ENCODE measurements at regions of chrX and their contacts with region 1.

Region 1: DNA sequence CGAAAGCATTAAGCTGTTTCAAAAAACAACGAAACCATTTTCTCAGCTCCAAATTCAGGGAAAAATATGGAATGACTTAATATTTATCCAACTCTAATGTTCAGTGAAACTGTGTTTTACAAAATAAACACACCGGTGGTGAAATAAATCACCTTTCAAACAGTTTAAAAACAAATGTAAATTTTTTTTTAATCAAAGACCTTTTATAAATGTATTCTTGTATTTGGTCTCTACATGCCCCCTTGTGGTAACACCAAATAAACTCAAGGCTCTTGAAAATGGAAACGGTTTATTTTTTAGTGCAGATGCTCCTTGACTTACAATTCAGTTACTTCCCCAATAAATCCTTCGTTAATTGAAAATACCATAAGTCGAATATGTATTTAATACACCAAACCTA is 45.8 kb upstream of the ITM2A start:
- DNase-seq: no peak
- ATAC-seq: no peak
- H3K4me3 ChIP-seq: peak overlapping the region in 9 of 10 donors; percentile 3 to 49 (median 42)
- H3K27ac ChIP-seq: peak overlapping the region in 4 of 10 donors; percentile 5 to 69 (median 64)
- H3K4me1 ChIP-seq: no peaks in the 10 kb centered on the region
- H3K27me3 ChIP-seq: peaks cover 0 to 5% (median 0%) of the 10 kb centered on the region in 7 donors
- CTCF ChIP-seq: peak in 8 of 9 donors; percentile 14 to 65 (median 44)

Region 2: GRCh38 chrX:78555401-78555980 is 857.5 kb before region 1 on chrX:
- intact Hi-C with region 1: loop called in 3 of 10 experiments (anchors 5 to 10 kb)
- DNase-seq: no peak
- ATAC-seq: no peak
- H3K4me3 ChIP-seq: no peak overlapping the region
- H3K27ac ChIP-seq: no peak overlapping the region
- H3K4me1 ChIP-seq: no peaks in the 10 kb centered on the region
- H3K27me3 ChIP-seq: no peaks in the 10 kb centered on the region
- CTCF ChIP-seq: peak; percentile 6 to 60 (median 45)

Region 3: GRCh38 chrX:79081895-79082512 is 331.0 kb before region 1 on chrX:
- intact Hi-C with region 1: loop called in 1 of 10 experiments (anchors 5 kb)
- DNase-seq: peak in 1 of 2 donors; percentile 6
- ATAC-seq: peak in 5 of 8 donors; percentile 23 to 61 (median 50)
- H3K4me3 ChIP-seq: no peak overlapping the region
- H3K27ac ChIP-seq: peak overlapping the region in 1 of 10 donors; percentile 22
- H3K4me1 ChIP-seq: peaks cover 0 to 7% (median 0%) of the 10 kb centered on the region in 9 donors
- H3K27me3 ChIP-seq: peaks cover 0 to 14% (median 0%) of the 10 kb centered on the region in 7 donors
- CTCF ChIP-seq: peak; percentile 26 to 69 (median 62)

Region 4: DNA sequence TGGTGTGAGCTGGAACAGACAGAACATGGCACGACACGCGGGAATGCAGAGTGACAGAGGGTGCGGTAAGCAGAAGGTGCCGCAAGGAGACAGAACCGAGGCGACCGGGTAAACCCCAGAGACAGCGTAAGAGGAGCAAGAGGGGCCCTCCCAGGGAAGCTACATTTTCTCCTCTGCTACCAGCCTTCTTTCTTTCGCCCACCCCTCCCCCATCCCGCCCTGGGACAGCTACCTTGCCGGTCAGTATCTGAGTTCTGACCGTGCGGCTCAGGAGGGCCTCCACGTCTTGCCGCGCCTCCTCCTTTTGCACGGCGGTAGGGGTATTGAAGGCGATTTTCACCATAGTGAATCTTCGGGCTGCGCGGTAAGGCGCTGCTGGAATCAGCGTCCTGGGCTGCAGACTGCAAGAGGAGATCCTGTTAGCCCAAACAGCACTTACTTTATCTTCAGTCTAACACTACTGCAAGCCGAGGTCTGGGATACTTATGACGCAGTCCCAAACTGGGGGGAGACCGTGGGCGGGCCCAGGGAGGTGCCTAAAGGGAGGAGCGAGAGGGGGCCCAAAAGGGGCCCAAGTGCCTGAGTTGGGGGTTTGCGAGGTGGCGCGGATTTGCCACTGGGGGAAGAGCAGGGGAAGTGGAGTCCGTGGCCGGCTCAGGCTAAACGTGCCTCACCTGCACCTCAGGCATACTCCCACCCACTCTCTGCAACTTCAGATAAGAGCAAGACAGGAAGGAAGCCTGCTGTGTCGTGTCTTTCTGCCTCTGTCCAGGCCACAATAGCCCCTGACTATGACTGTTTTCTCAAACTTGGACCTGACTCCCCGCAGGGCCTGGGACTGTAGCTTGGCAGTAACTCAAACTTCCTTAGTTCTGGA is 45.9 kb before region 1 on chrX and contains the start of gene ITM2A:
- intact Hi-C with region 1: loop called in 1 of 10 experiments (anchors 2 kb)
- DNase-seq: peak; percentile 32 to 46
- ATAC-seq: peak; percentile 79 to 94 (median 89)
- H3K4me3 ChIP-seq: peak within 1 kb of the TSS; percentile 32 to 63 (median 52)
- H3K27ac ChIP-seq: peak within 1 kb of the TSS in 9 of 10 donors; percentile 61 to 82 (median 69)
- H3K4me1 ChIP-seq: peaks cover 0 to 4% (median 0%) of the 10 kb centered on the region in 9 donors
- H3K27me3 ChIP-seq: peaks cover 0 to 4% (median 0%) of the 10 kb centered on the region in 7 donors
- CTCF ChIP-seq: no peak
- total RNA-seq, gene ITM2A: 43.5 to 85.2 (median 64.4) TPM

Region 5: GRCh38 chrX:79466636-79467035 is 53.7 kb after region 1 on chrX:
- intact Hi-C with region 1: no loop called
- DNase-seq: no peak
- ATAC-seq: no peak
- H3K4me3 ChIP-seq: no peak overlapping the region
- H3K27ac ChIP-seq: no peak overlapping the region
- H3K4me1 ChIP-seq: no peaks in the 10 kb centered on the region
- H3K27me3 ChIP-seq: peaks cover 0 to 25% (median 0%) of the 10 kb centered on the region in 7 donors
- CTCF ChIP-seq: no peak

Measured in heart right ventricle (tissue), 16 donors.